B cell (primary cell): ENCODE measurements at regions of chr10 and their contacts with region 1.

Region 1: DNA sequence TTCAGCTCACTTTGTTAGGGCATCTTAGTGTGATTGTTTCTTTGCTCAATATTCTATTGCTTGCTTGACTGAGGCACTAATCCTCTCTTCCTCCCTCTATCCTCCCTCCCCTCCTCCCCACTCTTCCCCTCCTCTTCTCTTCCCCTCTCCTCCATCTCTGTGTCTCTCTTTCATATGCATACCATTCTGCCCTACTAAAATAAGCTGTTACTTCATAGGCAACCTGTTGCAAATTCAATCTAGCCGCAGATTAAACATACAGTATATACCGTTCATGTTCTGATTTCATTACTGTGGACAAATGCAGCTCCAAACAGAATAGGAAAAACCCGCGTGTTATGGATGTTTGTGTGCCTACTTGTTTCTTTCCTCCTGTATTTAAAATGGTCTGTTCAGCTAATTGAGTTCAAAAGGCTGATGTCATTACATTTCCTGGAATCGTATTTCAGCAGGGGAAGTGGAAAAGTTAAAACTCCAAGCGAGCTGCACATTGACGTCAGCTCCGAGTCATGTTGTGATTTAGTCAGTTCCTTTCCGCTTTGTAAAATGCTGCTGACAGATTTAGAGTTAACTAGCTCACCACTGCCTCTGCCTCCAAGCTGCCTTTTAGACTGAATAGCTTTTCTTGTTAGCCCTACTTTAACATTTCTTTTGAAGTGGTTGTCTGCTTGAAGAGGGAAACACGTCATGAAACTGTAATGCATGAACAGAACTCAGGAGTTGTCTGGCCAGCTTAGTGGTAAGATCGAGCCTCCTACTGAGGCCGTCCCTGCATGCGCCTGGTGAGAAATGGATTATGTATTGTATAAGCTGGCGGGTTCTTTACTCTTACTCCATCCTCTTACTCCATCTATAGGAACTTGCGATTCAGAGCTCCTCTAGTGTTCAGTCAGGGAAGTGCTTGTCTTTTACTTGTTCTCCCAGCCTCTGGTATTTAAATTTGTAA is 69.0 kb downstream of the CREM start:
- DNase-seq: peak; percentile 96
- ATAC-seq: peak; percentile 87
- H3K4me3 ChIP-seq: peak overlapping the region; percentile 38 to 68 (median 60)
- H3K4me3 Mint-ChIP-seq: peak overlapping the region; percentile 93
- H3K27ac ChIP-seq: peak overlapping the region; percentile 94 to 98
- H3K27ac Mint-ChIP-seq: peak overlapping the region; percentile 98
- H3K4me1 ChIP-seq: peaks cover 7 to 12% of the 10 kb centered on the region in 2 donors
- H3K4me1 Mint-ChIP-seq: peaks cover 32% of the 10 kb centered on the region
- H3K27me3 ChIP-seq: no peaks in the 10 kb centered on the region
- H3K27me3 Mint-ChIP-seq: no peaks in the 10 kb centered on the region
- CTCF ChIP-seq: peak; percentile 83

Region 2: GRCh38 chr10:35119378-35119777 is 76.3 kb before region 1 on chr10:
- CTCF ChIA-PET with region 1: interaction called, 156 read pairs
- POLR2A ChIA-PET with region 1: interaction called, 4 read pairs
- intact Hi-C with region 1: no loop called
- DNase-seq: no peak
- ATAC-seq: no peak
- H3K4me3 ChIP-seq: no peak overlapping the region
- H3K4me3 Mint-ChIP-seq: no peak overlapping the region
- H3K27ac ChIP-seq: no peak overlapping the region
- H3K27ac Mint-ChIP-seq: no peak overlapping the region
- H3K4me1 ChIP-seq: no peaks in the 10 kb centered on the region
- H3K4me1 Mint-ChIP-seq: peaks cover 2% of the 10 kb centered on the region
- H3K27me3 ChIP-seq: no peaks in the 10 kb centered on the region
- H3K27me3 Mint-ChIP-seq: no peaks in the 10 kb centered on the region
- CTCF ChIP-seq: no peak

Region 3: DNA sequence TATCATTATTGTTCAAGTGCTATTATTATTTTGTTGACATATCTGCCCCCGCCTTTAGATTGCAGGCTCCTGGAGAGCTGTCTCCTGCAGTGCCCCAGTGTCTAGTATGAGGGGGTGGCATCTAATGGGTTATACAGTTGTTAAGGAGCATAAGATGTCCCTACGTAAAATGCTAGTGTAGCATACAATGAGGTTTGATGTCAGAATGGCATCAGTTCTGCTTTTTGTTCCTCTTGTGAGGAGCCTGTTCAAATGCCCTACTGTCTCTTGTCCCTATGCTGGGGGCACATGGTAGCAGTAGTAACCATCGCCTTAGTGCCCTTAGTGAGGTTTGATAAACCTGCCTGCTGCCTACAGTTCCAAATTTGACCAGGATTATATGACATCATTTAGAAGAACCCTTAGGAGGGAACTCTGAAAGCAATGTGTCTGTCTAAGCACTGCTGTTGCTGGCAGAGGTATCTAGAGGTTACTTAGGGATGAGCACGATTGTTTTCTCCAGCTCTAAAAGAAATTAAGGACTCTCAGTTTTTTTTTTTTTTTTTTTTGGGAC is 59.3 kb before region 1 on chr10:
- CTCF ChIA-PET with region 1: interaction called, 156 read pairs
- POLR2A ChIA-PET with region 1: interaction called, 7 read pairs
- intact Hi-C with region 1: loop called (anchors 1 kb)
- DNase-seq: peak; percentile 89
- ATAC-seq: peak; percentile 85
- H3K4me3 ChIP-seq: peak overlapping the region in 1 of 5 experiments; percentile 42
- H3K4me3 Mint-ChIP-seq: peak overlapping the region; percentile 73
- H3K27ac ChIP-seq: peak overlapping the region; percentile 23 to 28
- H3K27ac Mint-ChIP-seq: peak overlapping the region; percentile 91
- H3K4me1 ChIP-seq: peaks cover 24 to 27% of the 10 kb centered on the region in 2 donors
- H3K4me1 Mint-ChIP-seq: peaks cover 39% of the 10 kb centered on the region
- H3K27me3 ChIP-seq: no peaks in the 10 kb centered on the region
- H3K27me3 Mint-ChIP-seq: no peaks in the 10 kb centered on the region
- CTCF ChIP-seq: no peak

Region 4: DNA sequence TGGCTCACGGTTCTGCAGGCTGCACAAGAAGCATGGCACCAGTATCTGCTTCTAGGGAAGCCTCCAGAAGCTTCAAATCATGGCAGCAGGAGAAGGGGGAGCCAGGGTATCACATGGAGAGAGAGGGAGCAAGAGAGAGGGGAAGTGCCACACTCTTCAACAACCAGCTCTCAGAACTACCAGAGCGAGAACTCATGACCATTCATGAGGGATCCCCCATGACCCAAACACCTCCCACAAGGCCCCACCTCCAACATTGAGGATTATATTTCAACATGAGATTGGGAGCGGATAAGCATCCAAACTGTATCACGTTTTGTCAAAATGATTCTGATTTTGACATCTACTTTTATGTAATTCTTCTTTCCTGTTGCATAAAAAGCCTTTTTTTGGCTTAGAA is 30.5 kb before region 1 on chr10:
- CTCF ChIA-PET with region 1: interaction called, 3 read pairs
- POLR2A ChIA-PET with region 1: interaction called, 11 read pairs
- intact Hi-C with region 1: no loop called
- DNase-seq: no peak
- ATAC-seq: no peak
- H3K4me3 ChIP-seq: no peak overlapping the region
- H3K4me3 Mint-ChIP-seq: no peak overlapping the region
- H3K27ac ChIP-seq: no peak overlapping the region
- H3K27ac Mint-ChIP-seq: no peak overlapping the region
- H3K4me1 ChIP-seq: no peaks in the 10 kb centered on the region
- H3K4me1 Mint-ChIP-seq: no peaks in the 10 kb centered on the region
- H3K27me3 ChIP-seq: no peaks in the 10 kb centered on the region
- H3K27me3 Mint-ChIP-seq: no peaks in the 10 kb centered on the region
- CTCF ChIP-seq: no peak

Region 5: DNA sequence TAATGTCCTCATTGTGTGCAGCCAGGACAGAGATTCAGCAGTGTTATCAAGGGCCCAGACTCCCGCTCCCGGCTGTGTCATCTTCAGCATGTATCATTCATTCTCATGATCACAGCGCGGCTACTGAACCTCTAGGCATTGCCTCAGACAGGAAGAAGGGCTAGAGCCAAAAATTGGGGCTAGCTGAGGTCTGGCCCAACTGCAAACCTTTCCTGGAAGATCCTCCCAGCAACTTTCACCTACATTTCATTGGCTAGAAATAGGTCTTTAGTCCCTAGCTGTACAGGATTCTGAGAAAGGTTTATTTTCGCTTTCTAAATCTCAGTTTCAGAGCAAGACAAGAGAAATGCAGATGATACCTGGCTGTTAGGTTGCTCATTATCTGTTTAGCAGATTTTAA is 12.9 kb after region 1 on chr10:
- CTCF ChIA-PET with region 1: interaction called, 10 read pairs
- POLR2A ChIA-PET with region 1: no interaction called
- intact Hi-C with region 1: no loop called
- DNase-seq: no peak
- ATAC-seq: no peak
- H3K4me3 ChIP-seq: no peak overlapping the region
- H3K4me3 Mint-ChIP-seq: no peak overlapping the region
- H3K27ac ChIP-seq: no peak overlapping the region
- H3K27ac Mint-ChIP-seq: peak overlapping the region; percentile 10
- H3K4me1 ChIP-seq: no peaks in the 10 kb centered on the region
- H3K4me1 Mint-ChIP-seq: peaks cover 7% of the 10 kb centered on the region
- H3K27me3 ChIP-seq: no peaks in the 10 kb centered on the region
- H3K27me3 Mint-ChIP-seq: no peaks in the 10 kb centered on the region
- CTCF ChIP-seq: no peak

Region 6: DNA sequence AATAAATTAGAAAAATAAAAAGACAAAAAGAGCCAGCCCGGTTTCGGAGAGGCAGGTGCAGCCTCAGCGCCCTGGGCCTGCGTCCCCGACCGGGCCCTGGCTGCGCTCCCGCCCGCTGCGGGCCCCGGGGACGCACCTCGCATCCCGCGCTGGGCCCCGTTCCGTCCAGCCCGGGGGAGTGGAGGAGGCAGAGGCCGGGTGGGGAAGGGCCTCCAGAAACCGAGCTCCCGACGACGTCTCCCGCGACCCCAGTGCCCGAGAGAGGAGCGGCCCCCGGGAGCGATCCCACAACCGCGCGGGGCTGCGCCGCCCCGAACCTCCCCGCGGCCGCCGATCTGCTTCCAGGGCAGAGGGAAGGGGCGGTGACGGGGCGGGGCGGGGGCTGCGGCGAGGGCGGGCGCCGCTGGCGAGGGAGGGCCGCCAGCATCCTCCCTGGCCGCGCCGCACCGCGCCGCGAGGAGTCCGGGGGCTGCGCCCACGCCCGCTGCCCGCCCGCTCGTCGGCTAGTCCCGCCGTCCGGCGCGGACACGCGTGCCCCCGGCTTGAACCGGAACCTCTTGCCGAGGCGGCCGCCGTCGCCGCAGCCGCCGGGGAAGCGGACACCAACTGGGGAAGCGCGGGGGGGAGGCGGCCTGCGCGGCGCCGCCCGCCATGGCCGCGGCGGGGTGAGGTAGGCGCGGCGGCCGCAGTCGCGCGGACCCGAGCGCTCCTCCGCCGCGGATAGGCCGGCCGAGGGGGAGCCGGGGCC is 140.6 kb after region 1 on chr10 and contains the start of gene CCNY:
- CTCF ChIA-PET with region 1: interaction called, 5 read pairs
- POLR2A ChIA-PET with region 1: no interaction called
- intact Hi-C with region 1: loop called (anchors 1 kb)
- DNase-seq: peak; percentile 83
- ATAC-seq: peak; percentile 87
- H3K4me3 ChIP-seq: peak within 1 kb of the TSS; percentile 50 to 90 (median 74)
- H3K4me3 Mint-ChIP-seq: peak within 1 kb of the TSS; percentile 87
- H3K27ac ChIP-seq: peak within 1 kb of the TSS; percentile 43 to 77
- H3K27ac Mint-ChIP-seq: peak within 1 kb of the TSS; percentile 82
- H3K4me1 ChIP-seq: peaks cover 34% of the 10 kb centered on the region in 2 donors
- H3K4me1 Mint-ChIP-seq: peaks cover 56% of the 10 kb centered on the region
- H3K27me3 ChIP-seq: no peaks in the 10 kb centered on the region
- H3K27me3 Mint-ChIP-seq: no peaks in the 10 kb centered on the region
- CTCF ChIP-seq: no peak
- total RNA-seq, gene CCNY: 61.7 and 64.9 TPM in 2 replicates